RWPE1 (cell line): ENCODE measurements at regions of chr9 and their contacts with region 1.

Region 1: DNA sequence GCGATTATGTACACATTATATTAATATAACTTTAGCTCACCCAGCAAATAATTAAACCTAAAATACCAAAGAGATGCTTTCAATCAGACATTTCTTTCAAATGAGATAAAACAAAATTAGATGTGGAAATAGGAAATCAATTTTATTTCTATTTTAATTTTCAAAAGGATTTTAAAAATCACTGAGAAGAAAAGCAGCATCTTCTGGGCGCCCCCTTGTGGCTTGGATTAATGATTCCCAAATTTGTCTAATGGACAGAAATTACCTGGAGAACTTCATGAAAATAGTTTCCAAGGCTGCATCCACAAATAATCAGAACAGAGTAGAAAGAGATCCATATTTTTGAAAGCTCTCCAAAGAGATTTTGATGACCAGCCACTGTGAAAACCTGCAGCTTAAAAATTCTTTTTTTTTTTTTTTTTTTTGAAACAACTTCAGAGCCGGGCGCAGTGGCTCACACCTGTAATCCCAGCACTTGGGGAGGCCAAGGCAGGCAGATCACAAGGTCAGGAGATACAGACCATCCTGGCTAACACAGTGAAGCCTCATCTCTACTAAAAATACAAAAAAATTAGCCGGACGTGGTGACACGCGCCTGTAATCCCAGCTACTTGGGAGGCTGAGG is 50.9 kb upstream of the CEMIP2 start:
- DNase-seq: peak; percentile 42
- H3K27ac ChIP-seq: no peak overlapping the region
- CTCF ChIP-seq: peak; percentile 82

Region 2: DNA sequence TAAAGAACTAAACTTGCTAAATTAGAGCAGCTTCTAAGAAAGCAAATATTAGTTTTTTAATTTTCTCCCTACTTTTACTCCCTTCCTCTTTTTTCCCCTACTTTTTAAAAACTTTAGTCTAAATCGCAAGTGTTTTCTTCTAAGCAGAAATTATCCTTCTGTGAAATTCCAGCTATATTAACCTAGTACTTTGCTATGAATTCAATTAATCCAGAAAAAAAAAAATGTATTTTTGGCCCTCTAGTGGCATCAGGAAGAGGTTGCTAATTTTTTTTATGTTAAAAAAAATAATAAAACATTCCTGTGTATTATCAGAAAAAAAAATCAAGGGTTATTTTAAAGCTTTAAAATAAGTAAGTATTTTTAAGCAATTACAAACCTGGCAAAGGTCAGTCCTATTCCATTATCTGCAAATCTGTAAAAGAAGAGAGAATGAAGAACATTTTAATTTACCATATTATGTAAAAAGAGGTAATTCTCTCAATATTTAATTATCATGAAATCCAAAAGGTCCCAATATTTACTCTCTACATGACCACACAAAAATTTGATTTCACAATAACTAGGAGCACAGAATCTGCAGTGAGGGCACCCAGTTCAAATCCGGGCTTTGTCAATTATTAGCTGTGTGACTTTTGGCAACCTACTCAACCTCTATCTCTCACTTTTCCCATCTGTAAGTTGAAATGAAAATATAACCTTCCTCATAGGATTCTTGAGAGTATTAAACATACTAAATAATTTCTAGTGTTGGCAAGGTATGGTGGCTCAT is 102.9 kb before region 1 on chr9:
- CTCF ChIA-PET with region 1: interaction called, 11 read pairs
- POLR2A ChIA-PET with region 1: no interaction called
- DNase-seq: peak; percentile 13
- H3K27ac ChIP-seq: no peak overlapping the region
- CTCF ChIP-seq: peak; percentile 55

Region 3: GRCh38 chr9:72025931-72026342 is 206.7 kb after region 1 on chr9:
- CTCF ChIA-PET with region 1: interaction called, 10 read pairs
- POLR2A ChIA-PET with region 1: no interaction called
- DNase-seq: peak; percentile 72
- H3K27ac ChIP-seq: peak overlapping the region; percentile 57; the same call in 1 of the 2 replicates
- CTCF ChIP-seq: no peak